ENCODE measurements at regions of chr3 and their contacts with region 1.

Region 1: GRCh38 chr3:5057857-5058324 is 64.2 kb upstream of the ARL8B start:
- DNase-seq: peak; percentile 89
- H3K4me3 Mint-ChIP-seq: no peak overlapping the region
- H3K27ac Mint-ChIP-seq: no peak overlapping the region
- H3K4me1 Mint-ChIP-seq: peaks cover 22% of the 10 kb centered on the region
- H3K27me3 Mint-ChIP-seq: peaks cover 11% of the 10 kb centered on the region
- CTCF ChIP-seq: peak; percentile 68

Region 2: GRCh38 chr3:4350789-4351163 is 707.1 kb before region 1 on chr3:
- CTCF ChIA-PET with region 1: no interaction called
- POLR2A ChIA-PET with region 1: no interaction called
- intact Hi-C with region 1: loop called (anchors 5 kb)
- DNase-seq: peak; percentile 68
- H3K4me3 Mint-ChIP-seq: no peak overlapping the region
- H3K27ac Mint-ChIP-seq: no peak overlapping the region
- H3K4me1 Mint-ChIP-seq: peaks cover 7% of the 10 kb centered on the region
- H3K27me3 Mint-ChIP-seq: no peaks in the 10 kb centered on the region
- CTCF ChIP-seq: peak; percentile 67

Region 3: GRCh38 chr3:4656059-4656458 is 401.8 kb before region 1 on chr3:
- CTCF ChIA-PET with region 1: interaction called, 7 read pairs
- POLR2A ChIA-PET with region 1: no interaction called
- intact Hi-C with region 1: loop called (anchors 1 kb)
- DNase-seq: peak; percentile 71
- H3K4me3 Mint-ChIP-seq: no peak overlapping the region
- H3K27ac Mint-ChIP-seq: no peak overlapping the region
- H3K4me1 Mint-ChIP-seq: peaks cover 11% of the 10 kb centered on the region
- H3K27me3 Mint-ChIP-seq: no peaks in the 10 kb centered on the region
- CTCF ChIP-seq: peak; percentile 82

Region 4: DNA sequence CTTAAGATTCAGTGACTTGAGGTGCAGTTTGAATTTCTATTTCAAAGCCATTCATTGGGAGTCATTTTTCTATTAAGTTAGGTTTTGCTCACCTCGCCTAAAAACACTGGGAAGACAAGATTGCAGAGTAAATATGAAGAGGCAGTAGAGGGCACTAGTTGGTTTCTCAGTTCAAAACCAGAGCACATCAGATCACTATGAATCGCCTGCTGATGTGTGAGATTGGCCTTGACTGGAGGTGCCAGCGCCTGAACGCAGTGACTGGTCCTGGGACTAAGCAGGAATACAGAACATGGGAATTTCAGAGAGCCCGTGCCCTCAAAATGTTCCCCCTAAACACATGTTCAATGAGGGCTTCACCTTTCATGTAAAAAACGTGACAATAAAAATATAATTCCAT is 335.8 kb before region 1 on chr3:
- CTCF ChIA-PET with region 1: interaction called, 24 read pairs
- POLR2A ChIA-PET with region 1: interaction called, 4 read pairs
- intact Hi-C with region 1: loop called (anchors 1 kb)
- DNase-seq: peak; percentile 87
- H3K4me3 Mint-ChIP-seq: no peak overlapping the region
- H3K27ac Mint-ChIP-seq: no peak overlapping the region
- H3K4me1 Mint-ChIP-seq: peaks cover 18% of the 10 kb centered on the region
- H3K27me3 Mint-ChIP-seq: no peaks in the 10 kb centered on the region
- CTCF ChIP-seq: peak; percentile 59

Region 5: GRCh38 chr3:4943553-4943952 is 114.3 kb before region 1 on chr3:
- CTCF ChIA-PET with region 1: no interaction called
- POLR2A ChIA-PET with region 1: no interaction called
- intact Hi-C with region 1: no loop called
- DNase-seq: peak; percentile 24
- H3K4me3 Mint-ChIP-seq: no peak overlapping the region
- H3K27ac Mint-ChIP-seq: no peak overlapping the region
- H3K4me1 Mint-ChIP-seq: no peaks in the 10 kb centered on the region
- H3K27me3 Mint-ChIP-seq: no peaks in the 10 kb centered on the region
- CTCF ChIP-seq: peak; percentile 8

Region 6: DNA sequence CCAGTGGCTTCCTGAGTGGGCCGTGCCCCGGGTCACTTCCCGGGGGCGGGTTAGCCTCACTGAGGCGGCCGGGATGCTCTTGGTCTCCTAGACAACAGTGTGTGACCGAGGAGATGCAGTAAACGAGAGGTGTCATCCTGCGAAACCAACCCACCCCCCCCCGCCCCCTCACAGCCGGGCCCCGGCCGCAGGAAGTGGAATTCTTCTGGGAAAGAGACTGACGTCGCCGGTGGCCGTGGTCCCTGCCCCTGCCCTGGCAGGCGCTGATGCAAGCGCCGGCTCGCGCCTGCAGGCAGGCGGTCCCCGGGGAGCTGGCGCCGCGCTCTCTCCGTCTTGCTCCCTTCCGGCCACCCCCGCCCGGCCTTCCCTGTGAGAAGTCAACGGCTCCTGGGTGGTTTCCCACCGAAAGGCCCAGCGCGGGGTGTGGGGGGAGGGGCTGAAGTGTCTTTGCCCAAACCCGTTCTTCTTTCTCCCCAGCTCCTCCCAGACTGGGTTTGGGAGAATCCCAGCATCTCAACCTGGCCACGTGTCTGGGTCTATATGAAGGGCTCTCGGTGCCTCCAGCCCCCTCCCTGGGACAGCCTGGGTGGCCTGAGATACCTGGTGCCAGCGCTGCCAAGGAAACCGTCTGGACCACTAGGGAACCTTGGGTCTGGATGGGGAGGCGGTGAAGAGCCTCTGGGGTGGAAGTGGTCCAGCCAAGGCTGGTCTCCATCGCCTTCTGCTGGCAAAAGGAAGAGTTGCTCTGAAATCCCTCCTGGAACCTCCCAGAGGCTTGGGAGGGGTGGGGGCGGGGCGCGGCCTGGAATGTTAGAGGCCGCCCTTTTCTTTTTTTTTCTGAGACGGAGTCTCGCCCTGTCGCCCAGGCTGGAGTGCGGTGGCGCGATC is 31.3 kb before region 1 on chr3:
- CTCF ChIA-PET with region 1: interaction called, 10 read pairs
- POLR2A ChIA-PET with region 1: interaction called, 3 read pairs
- intact Hi-C with region 1: loop called (anchors 1 kb)
- DNase-seq: peak; percentile 96
- H3K4me3 Mint-ChIP-seq: peak overlapping the region; percentile 74
- H3K27ac Mint-ChIP-seq: peak overlapping the region; percentile 84
- H3K4me1 Mint-ChIP-seq: peaks cover 23% of the 10 kb centered on the region
- H3K27me3 Mint-ChIP-seq: no peaks in the 10 kb centered on the region
- CTCF ChIP-seq: peak; percentile 71

Region 7: DNA sequence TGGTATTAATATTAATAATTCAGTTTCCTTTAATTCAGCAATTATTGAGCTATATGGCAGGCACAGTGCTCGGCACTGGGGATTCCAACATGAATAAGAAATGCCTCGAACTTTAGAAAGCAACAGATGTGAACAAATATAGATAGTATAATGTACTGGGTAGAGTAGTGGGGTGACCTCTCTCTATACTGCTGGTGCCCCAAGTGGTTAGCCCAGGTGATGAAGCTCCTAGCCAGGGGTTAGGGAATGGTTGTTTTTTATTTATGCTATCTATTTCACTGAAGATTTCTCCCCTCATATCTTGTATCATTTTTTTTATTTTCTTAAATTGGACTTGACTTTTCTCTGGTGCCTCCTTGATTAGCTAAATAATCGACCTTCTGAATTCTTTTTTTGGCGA is 16.6 kb before region 1 on chr3:
- CTCF ChIA-PET with region 1: interaction called, 15 read pairs
- POLR2A ChIA-PET with region 1: interaction called, 3 read pairs
- intact Hi-C with region 1: no loop called
- DNase-seq: no peak
- H3K4me3 Mint-ChIP-seq: no peak overlapping the region
- H3K27ac Mint-ChIP-seq: no peak overlapping the region
- H3K4me1 Mint-ChIP-seq: no peaks in the 10 kb centered on the region
- H3K27me3 Mint-ChIP-seq: no peaks in the 10 kb centered on the region
- CTCF ChIP-seq: no peak

Region 8: DNA sequence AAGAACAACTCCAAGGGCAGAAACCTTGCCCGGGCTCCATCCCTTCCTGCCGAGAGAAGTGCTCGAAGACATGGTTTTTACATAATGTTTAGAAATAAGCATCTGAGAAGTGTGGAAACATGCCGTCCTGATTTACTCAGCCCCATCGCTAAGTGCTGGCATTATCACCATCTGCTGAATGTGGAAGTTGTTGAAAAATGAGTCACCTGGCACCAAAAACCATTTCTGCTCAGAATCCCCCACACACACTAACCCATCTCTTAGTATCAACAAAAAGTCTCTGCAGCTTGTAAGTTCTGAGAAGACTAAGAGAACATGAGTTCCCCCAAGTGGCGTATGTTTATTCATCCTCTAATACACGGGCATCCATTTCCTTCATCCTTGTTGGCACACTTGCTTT is 13.2 kb after region 1 on chr3:
- CTCF ChIA-PET with region 1: interaction called, 26 read pairs
- POLR2A ChIA-PET with region 1: interaction called, 20 read pairs
- intact Hi-C with region 1: no loop called
- DNase-seq: peak; percentile 78
- H3K4me3 Mint-ChIP-seq: no peak overlapping the region
- H3K27ac Mint-ChIP-seq: peak overlapping the region; percentile 42
- H3K4me1 Mint-ChIP-seq: peaks cover 24% of the 10 kb centered on the region
- H3K27me3 Mint-ChIP-seq: no peaks in the 10 kb centered on the region
- CTCF ChIP-seq: no peak

Region 9: GRCh38 chr3:5221701-5222100 is 163.8 kb after region 1 on chr3:
- CTCF ChIA-PET with region 1: no interaction called
- POLR2A ChIA-PET with region 1: no interaction called
- intact Hi-C with region 1: no loop called
- DNase-seq: no peak
- H3K4me3 Mint-ChIP-seq: no peak overlapping the region
- H3K27ac Mint-ChIP-seq: no peak overlapping the region
- H3K4me1 Mint-ChIP-seq: no peaks in the 10 kb centered on the region
- H3K27me3 Mint-ChIP-seq: no peaks in the 10 kb centered on the region
- CTCF ChIP-seq: no peak

Measured in MCF 10A (cell line).